ENCODE measurements at regions of chr2 and their contacts with region 1.

Region 1: DNA sequence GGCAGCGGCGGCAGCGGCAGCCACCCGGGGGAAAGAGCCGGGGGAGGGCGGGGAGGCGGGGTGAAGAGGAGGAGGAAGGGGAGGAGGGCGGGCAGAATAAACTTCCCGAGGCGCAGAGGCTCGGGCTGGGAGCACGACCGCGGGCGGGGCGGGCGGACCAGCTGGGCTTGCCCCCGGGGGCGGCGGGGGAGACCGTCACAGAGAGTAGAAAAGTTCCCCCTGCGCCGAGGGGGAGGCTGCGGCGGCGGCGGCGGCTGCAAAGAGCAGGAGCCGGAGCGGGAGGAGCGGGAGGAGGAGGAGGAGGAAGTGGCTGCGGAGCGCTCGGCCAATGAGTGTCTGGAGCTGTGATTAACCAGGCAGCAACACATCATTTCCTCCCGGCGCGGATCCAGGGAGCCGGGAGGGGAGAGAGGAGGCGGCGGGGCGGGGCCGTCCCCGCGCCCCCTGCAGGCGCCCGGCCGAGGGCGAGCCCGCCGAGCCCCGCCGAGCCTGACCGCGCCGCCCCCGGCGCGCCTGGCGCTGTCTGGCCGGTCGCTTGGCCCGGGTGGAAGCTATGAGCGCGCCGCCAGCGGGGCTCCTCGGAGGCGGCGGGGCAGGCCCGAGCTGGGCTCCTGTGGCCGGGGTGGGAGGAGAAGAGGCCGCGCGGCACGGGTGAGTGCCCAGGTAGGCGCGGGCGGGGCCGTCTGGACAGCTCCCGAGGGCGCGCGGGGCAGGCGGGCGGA is at the start of gene ACVR1:
- DNase-seq: peak; percentile 83
- H3K4me3 Mint-ChIP-seq: peak within 1 kb of the TSS; percentile 85
- H3K27ac Mint-ChIP-seq: peak within 1 kb of the TSS; percentile 86
- H3K4me1 Mint-ChIP-seq: peaks cover 62% of the 10 kb centered on the region
- H3K27me3 Mint-ChIP-seq: no peaks in the 10 kb centered on the region
- total RNA-seq, gene ACVR1: 26.7 and 27.1 TPM in 2 replicates

Region 2: GRCh38 chr2:157722580-157723234 is 153.5 kb before region 1 on chr2:
- intact Hi-C with region 1: no loop called
- DNase-seq: no peak
- H3K4me3 Mint-ChIP-seq: no peak overlapping the region
- H3K27ac Mint-ChIP-seq: no peak overlapping the region
- H3K4me1 Mint-ChIP-seq: no peaks in the 10 kb centered on the region
- H3K27me3 Mint-ChIP-seq: no peaks in the 10 kb centered on the region

Region 3: GRCh38 chr2:157838442-157839161 is 37.6 kb before region 1 on chr2:
- intact Hi-C with region 1: loop called (anchors 5 kb)
- DNase-seq: peak; percentile 11
- H3K4me3 Mint-ChIP-seq: no peak overlapping the region
- H3K27ac Mint-ChIP-seq: peak overlapping the region; percentile 53
- H3K4me1 Mint-ChIP-seq: peaks cover 39% of the 10 kb centered on the region
- H3K27me3 Mint-ChIP-seq: no peaks in the 10 kb centered on the region

Region 4: DNA sequence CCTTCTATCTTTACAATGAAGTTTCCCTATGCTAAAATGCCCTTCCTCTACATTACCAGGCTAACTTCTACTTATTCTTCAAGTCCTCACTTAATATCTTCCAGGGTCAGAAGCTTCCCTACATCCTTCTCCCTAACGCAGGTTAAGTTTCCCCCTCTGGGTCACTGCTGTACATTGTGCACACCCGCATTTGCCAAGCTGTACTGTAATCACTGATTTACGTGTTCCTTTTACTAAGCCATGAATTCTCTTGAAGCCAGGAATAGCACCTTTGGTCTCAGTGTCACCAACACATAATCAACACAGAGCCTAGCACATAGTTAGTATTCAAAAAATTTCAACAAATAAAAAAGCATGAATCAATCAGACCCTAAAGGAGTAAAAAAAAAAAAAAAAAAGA is 22.4 kb before region 1 on chr2:
- intact Hi-C with region 1: loop called (anchors 2 kb)
- DNase-seq: no peak
- H3K4me3 Mint-ChIP-seq: no peak overlapping the region
- H3K27ac Mint-ChIP-seq: no peak overlapping the region
- H3K4me1 Mint-ChIP-seq: peaks cover 23% of the 10 kb centered on the region
- H3K27me3 Mint-ChIP-seq: no peaks in the 10 kb centered on the region